Activated T-helper 2 cell treated with anti-CD3 and anti-CD28 coated beads, Interferon-gamma antibody, Interleukin-2, Interleukin-4, amounts not matched to agents 10 μg/mL and 5 μg/mL and 100 μg/mL, durations not matched to agents 14 hours and 24 hours and 36 hours (primary cell): ENCODE measurements at regions of chr5 and their contacts with region 1.

Region 1: GRCh38 chr5:150436141-150436680 is 13.3 kb downstream of the RPS14 start:
- DNase-seq: peak; percentile 83
- H3K4me3 Mint-ChIP-seq: peak overlapping the region; percentile 49
- H3K27ac Mint-ChIP-seq: peak overlapping the region; percentile 46
- H3K4me1 Mint-ChIP-seq: peaks cover 11% of the 10 kb centered on the region
- H3K27me3 Mint-ChIP-seq: no peaks in the 10 kb centered on the region

Region 2: DNA sequence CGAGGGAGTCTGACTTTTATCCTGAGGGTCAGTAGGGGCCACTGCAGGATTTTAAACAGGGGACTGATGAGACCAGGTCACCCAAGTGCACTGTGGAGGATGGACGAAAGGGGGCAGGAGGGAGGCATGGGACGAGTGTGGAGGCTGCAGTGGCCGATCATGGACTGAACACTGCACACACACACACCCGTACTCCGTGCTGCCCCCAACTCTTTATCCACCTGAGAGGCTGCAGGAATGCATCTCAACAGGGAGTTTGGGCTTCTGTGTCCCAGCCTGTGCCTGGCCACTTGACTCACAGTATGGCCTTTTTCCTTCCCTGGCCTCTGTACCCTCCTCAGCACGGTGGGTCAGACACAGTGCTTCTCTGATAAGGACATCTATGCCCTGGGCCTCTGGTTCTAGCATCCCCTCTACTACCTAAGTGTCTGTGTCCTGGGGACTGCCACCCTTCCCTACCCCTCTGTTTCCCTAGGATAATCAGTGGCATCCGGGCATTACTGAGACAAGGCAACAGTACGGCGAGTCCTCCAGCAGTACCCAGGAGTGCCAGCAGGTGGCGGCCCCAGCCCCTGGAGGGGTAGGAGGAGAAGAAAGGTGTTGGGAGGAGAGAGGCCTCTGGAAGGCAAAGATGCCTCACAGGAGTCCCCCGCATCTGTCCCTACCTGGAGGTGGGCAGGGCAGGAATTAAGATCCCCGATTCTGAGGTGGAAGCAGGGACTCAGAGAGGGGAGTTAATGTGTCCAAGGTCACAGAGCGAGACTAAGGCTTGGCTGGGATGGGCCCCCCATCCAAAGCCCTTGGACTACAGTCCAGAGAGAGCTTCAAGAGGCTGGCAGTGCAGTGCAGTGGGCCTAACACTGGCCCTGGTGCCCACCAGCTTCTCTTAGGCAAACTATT is 274.7 kb before region 1 on chr5:
- intact Hi-C with region 1: loop called (anchors 1 kb)
- DNase-seq: peak; percentile 60
- H3K4me3 Mint-ChIP-seq: no peak overlapping the region
- H3K27ac Mint-ChIP-seq: no peak overlapping the region
- H3K4me1 Mint-ChIP-seq: no peaks in the 10 kb centered on the region
- H3K27me3 Mint-ChIP-seq: peaks cover 21% of the 10 kb centered on the region

Region 3: GRCh38 chr5:150357326-150358260 is 78.6 kb before region 1 on chr5 and contains the start of gene TCOF1:
- intact Hi-C with region 1: loop called (anchors 2 kb)
- DNase-seq: peak; percentile 96
- H3K4me3 Mint-ChIP-seq: peak within 1 kb of the TSS; percentile 87
- H3K27ac Mint-ChIP-seq: peak within 1 kb of the TSS; percentile 85
- H3K4me1 Mint-ChIP-seq: peaks cover 32% of the 10 kb centered on the region
- H3K27me3 Mint-ChIP-seq: peaks cover 4% of the 10 kb centered on the region
- total RNA-seq, gene TCOF1: 95.8 and 98.2 TPM in 2 replicates

Region 4: DNA sequence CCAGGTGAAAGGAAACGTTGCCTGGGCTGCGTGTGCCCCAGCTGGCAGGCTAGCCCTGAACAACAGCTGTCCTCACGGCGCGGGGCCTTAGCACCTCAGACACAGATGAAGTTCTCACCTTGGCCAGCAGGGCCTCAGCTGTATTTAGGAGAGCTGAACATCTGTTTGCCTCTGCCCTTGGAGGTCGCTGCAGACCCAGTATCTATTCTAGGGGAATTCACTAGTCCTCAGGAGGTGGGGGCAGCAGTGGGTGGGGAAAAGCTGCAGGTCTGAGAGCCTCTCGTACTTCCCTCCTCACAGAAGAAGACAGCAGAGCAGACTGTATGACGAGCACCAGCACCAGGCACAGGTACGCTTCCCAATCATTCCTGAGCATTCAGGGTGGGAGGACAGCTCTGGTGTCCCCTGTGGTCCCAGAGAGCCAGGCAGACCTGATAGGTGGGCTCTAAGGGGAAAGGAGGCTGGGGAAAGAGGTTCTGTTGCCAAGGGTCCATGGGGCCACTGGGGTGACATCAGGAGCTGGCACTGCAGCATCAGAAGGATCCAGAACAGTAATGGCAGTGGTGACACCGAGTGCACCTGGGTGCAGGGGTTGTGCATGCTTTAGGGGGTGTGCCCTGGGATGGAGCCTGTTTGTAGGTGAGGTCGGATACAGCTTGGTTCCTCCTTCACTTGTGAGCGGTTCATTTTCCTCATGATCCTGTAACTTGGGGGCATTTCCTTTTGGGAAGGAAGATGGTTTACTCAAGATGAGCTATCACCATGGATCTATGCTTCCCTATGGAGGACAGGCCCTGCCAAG is 37.3 kb before region 1 on chr5:
- intact Hi-C with region 1: loop called (anchors 5 kb)
- DNase-seq: no peak
- H3K4me3 Mint-ChIP-seq: no peak overlapping the region
- H3K27ac Mint-ChIP-seq: no peak overlapping the region
- H3K4me1 Mint-ChIP-seq: peaks cover 5% of the 10 kb centered on the region
- H3K27me3 Mint-ChIP-seq: no peaks in the 10 kb centered on the region

Region 5: GRCh38 chr5:150412319-150413175 is 23.7 kb before region 1 on chr5 and contains the start of gene CD74:
- intact Hi-C with region 1: loop called (anchors 1 kb)
- DNase-seq: peak; percentile 90
- H3K4me3 Mint-ChIP-seq: peak within 1 kb of the TSS; percentile 88
- H3K27ac Mint-ChIP-seq: peak within 1 kb of the TSS; percentile 94
- H3K4me1 Mint-ChIP-seq: peaks cover 27% of the 10 kb centered on the region
- H3K27me3 Mint-ChIP-seq: no peaks in the 10 kb centered on the region
- total RNA-seq, gene CD74: 445 and 452 TPM in 2 replicates

Region 6: GRCh38 chr5:150449517-150450339 is 13.5 kb after region 1 on chr5 and contains the start of gene RPS14:
- intact Hi-C with region 1: loop called (anchors 1 kb)
- DNase-seq: peak; percentile 91
- H3K4me3 Mint-ChIP-seq: peak within 1 kb of the TSS; percentile 99
- H3K27ac Mint-ChIP-seq: peak within 1 kb of the TSS; percentile 100
- H3K4me1 Mint-ChIP-seq: peaks cover 23% of the 10 kb centered on the region
- H3K27me3 Mint-ChIP-seq: no peaks in the 10 kb centered on the region
- total RNA-seq, gene RPS14: 2,552 and 2,593 TPM in 2 replicates